CD4-positive, alpha-beta T cell (primary cell): ENCODE measurements at regions of chr22 and their contacts with region 1.

Region 1: DNA sequence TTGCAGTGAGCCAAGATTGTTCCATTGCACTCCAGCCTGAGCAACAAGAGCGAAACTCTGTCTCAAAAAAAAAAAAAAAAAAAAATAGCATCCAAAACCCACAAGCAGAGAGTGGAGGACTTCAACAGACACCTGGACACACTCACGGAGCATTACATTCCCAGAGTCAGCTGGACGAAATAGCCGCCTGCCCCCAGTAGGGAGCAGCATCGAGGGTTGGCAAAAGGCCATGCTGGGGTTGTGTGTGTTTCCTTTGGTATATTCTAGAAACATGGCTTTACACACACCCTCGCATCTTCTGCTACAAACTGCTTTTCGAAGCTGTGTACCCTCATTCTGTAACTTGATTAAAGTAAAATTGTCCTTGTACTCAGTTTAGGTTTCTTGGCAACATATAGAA is 5.3 kb downstream of the ADA2 start:
- DNase-seq: peak; percentile 31 to 77 (median 58)
- ATAC-seq: peak; percentile 40
- H3K4me3 ChIP-seq: no peak overlapping the region
- H3K4me3 Mint-ChIP-seq: peak overlapping the region; percentile 76
- H3K27ac ChIP-seq: peak overlapping the region in 1 of 2 donors; percentile 31
- H3K27ac Mint-ChIP-seq: peak overlapping the region; percentile 86
- H3K4me1 ChIP-seq: peaks cover 40% of the 10 kb centered on the region
- H3K4me1 Mint-ChIP-seq: peaks cover 65% of the 10 kb centered on the region
- H3K27me3 ChIP-seq: no peaks in the 10 kb centered on the region
- H3K27me3 Mint-ChIP-seq: no peaks in the 10 kb centered on the region
- CTCF ChIP-seq: peak; percentile 37

Region 2: DNA sequence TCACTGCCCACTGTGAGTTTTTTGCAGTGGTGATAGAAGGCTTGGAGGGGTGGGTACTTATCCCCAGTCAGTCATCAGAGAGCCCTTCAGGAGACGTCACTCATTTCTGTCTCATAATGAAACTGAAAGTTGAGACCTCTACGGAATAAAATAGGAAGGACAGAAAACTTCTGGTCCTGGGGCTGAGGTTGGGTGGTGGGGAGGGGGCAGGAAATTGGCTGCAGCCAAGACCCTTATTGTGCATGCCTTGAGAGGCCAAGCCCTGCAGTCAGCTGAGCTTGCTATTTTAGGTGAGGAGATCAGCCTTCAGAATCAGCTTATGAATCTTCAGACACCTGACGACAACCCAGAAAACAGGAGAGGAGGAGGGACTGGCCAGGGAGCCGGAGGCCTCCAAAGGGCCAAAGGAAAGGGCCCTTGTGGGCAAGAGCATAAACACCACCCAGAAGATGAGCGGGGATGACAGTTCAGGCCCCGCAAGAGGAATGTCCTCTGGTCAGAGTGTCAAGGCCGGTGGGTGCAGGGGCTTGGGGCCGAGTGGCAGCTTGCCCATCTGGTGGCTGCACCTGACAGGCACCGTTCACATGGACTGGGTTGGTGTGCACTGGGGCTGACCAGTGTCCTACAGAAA is 23.2 kb after region 1 on chr22:
- CTCF ChIA-PET with region 1: no interaction called
- POLR2A ChIA-PET with region 1: interaction called, 11 read pairs
- intact Hi-C with region 1: no loop called
- DNase-seq: peak in 8 of 14 experiments; percentile 5 to 77 (median 22)
- ATAC-seq: peak; percentile 87
- H3K4me3 ChIP-seq: peak overlapping the region; percentile 62
- H3K4me3 Mint-ChIP-seq: peak overlapping the region; percentile 86
- H3K27ac ChIP-seq: peak overlapping the region; percentile 27 to 66
- H3K27ac Mint-ChIP-seq: peak overlapping the region; percentile 74
- H3K4me1 ChIP-seq: peaks cover 15% of the 10 kb centered on the region
- H3K4me1 Mint-ChIP-seq: peaks cover 9% of the 10 kb centered on the region
- H3K27me3 ChIP-seq: no peaks in the 10 kb centered on the region
- H3K27me3 Mint-ChIP-seq: no peaks in the 10 kb centered on the region
- CTCF ChIP-seq: no peak

Region 3: DNA sequence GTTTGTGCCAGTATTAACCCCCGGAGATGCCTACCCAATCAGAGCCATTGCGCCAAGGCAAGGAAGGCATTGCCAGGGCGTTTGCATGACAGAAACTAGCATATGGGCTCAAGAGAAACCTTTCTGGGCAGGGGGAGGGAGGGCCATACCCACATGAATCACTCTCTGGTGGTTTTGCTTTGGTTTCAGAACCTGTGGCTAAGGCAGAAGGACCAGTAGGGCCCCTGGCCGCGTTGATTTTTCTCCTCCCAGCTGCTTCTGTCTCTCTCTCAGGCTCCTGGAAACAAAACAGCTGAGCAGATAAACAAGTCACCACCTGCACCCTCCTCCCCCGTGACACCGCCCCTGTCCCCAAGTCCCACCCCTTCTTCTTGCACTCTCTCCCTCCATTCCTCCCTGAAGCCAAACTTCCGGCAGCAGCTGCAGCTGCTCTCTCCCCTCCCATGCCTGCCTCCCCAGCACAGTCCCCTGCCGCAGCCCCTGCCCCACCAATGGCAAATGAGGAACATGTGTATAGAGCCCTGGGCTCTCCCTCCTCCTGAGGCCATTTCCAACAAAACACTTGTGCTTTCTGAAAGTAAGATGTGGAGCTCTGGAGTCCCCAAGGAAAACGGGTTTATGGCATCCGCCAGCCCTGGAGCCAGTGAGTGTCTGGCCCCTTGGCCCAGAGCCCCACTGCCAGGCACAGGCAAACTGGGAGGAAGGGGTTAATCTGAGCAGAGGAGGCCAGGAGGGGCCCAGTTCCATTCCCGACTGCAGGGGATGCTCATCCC is 44.2 kb after region 1 on chr22:
- CTCF ChIA-PET with region 1: no interaction called
- POLR2A ChIA-PET with region 1: interaction called, 15 read pairs
- intact Hi-C with region 1: loop called in 1 of 2 experiments (anchors 5 kb)
- DNase-seq: peak; percentile 16 to 74 (median 50)
- ATAC-seq: peak; percentile 92
- H3K4me3 ChIP-seq: peak overlapping the region; percentile 35
- H3K4me3 Mint-ChIP-seq: peak overlapping the region; percentile 65
- H3K27ac ChIP-seq: peak overlapping the region in 1 of 2 donors; percentile 18
- H3K27ac Mint-ChIP-seq: peak overlapping the region; percentile 81
- H3K4me1 ChIP-seq: peaks cover 23% of the 10 kb centered on the region
- H3K4me1 Mint-ChIP-seq: peaks cover 21% of the 10 kb centered on the region
- H3K27me3 ChIP-seq: no peaks in the 10 kb centered on the region
- H3K27me3 Mint-ChIP-seq: no peaks in the 10 kb centered on the region
- CTCF ChIP-seq: no peak